Activated CD4-positive, alpha-beta memory T cell treated with anti-CD3 and anti-CD28 coated beads for 36 hours (primary cell): ENCODE measurements at regions of chr2 and their contacts with region 1.

Region 1: DNA sequence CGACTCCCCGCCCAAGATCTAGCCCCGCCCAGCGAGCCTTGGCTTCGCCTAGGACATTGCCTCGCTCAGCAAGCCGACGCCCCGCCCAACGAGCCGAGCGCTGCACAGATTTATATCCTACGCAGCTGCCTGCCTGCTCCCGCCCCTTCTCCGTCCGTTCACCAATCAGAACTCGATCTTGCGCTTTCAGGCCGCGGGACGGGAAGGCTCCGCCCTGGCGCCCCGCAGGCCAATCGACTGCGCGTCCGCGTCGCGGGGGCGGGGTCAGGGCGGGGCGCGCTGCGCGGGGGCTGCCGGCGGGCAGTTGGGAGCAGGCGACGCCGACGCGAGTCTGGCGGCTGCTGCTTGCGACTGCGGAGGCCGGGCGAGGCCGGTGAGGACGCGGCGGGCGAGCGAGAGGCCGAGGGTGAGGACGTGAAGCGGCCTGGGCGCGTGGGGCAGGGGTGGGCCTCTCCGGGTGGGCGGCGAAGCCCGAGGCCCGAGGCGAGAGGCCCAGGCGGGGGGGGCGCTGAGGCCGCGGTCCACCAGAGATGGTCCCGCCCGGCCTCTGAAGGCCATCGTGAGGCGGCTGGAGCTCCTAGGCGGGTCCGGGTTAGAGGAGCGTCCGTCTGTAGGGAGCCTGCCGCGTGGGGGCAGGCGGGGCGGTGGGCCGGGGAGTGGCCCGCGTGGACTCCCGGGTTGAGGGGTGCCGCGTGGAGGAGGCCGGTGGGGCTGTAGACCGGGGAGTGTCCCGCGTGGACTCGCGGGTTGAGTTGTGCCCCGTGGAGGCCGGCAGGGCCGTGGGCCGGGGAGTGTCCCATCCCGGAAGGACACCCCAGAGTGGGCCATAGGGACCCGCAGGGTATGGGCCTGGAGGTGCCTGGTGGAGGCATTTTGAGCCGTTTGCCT is at the start of gene FARP2:
- DNase-seq: peak; percentile 98
- H3K4me3 Mint-ChIP-seq: peak within 1 kb of the TSS; percentile 75
- H3K27ac Mint-ChIP-seq: peak within 1 kb of the TSS; percentile 79
- H3K4me1 Mint-ChIP-seq: peaks cover 35% of the 10 kb centered on the region
- H3K27me3 Mint-ChIP-seq: no peaks in the 10 kb centered on the region
- total RNA-seq, gene FARP2: 25.1 to 29.5 TPM

Region 2: GRCh38 chr2:240021488-240022104 is 1334.6 kb before region 1 on chr2:
- CTCF ChIA-PET with region 1: no interaction called
- POLR2A ChIA-PET with region 1: no interaction called
- intact Hi-C with region 1: loop called (anchors 5 kb)
- DNase-seq: peak; percentile 76
- H3K4me3 Mint-ChIP-seq: no peak overlapping the region
- H3K27ac Mint-ChIP-seq: no peak overlapping the region
- H3K4me1 Mint-ChIP-seq: peaks cover 19% of the 10 kb centered on the region
- H3K27me3 Mint-ChIP-seq: no peaks in the 10 kb centered on the region

Region 3: GRCh38 chr2:241300000-241300399 is 56.2 kb before region 1 on chr2:
- CTCF ChIA-PET with region 1: no interaction called
- POLR2A ChIA-PET with region 1: no interaction called
- intact Hi-C with region 1: no loop called
- DNase-seq: peak; percentile 42
- H3K4me3 Mint-ChIP-seq: no peak overlapping the region
- H3K27ac Mint-ChIP-seq: no peak overlapping the region
- H3K4me1 Mint-ChIP-seq: peaks cover 37% of the 10 kb centered on the region
- H3K27me3 Mint-ChIP-seq: no peaks in the 10 kb centered on the region

Region 4: DNA sequence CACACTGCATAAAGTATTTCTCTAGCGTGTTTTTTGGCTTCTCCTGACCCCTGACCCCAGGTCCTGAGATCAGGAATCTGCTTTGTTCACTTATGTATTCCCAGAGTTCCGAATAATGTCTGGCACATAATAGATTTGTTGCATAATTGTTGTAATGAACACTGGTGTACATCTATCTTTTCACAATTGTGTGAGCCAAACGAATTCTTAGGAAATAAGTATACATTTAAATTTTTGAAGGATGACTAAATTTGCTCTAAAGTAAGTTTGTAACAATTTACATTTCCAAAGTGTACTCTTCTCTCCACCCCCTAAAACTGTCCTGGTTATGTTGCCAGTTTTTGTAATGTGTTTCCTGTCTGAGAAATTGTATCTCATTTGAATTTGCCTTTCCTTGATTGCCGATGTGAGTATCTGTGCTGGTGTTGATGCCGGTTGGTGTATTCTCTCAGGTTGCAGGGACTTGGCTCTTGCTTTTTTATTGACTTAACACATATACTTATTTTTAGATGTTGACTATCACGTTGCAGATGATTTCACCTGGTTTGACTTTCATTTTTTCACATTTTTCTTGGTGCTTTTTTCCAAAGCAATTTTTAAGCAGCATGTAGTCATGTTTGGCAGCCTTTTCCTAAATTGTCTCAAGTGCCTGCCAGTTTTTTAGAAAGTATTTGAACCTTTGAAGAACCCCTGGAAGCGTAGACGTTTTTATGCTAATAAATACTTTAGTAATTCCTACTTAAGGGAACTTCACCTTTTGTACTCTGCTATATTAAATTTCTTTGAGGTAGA is 16.2 kb before region 1 on chr2:
- CTCF ChIA-PET with region 1: no interaction called
- POLR2A ChIA-PET with region 1: no interaction called
- intact Hi-C with region 1: loop called (anchors 1 kb)
- DNase-seq: no peak
- H3K4me3 Mint-ChIP-seq: no peak overlapping the region
- H3K27ac Mint-ChIP-seq: peak overlapping the region; percentile 70
- H3K4me1 Mint-ChIP-seq: peaks cover 39% of the 10 kb centered on the region
- H3K27me3 Mint-ChIP-seq: no peaks in the 10 kb centered on the region

Region 5: GRCh38 chr2:241686649-241687425 is 330.6 kb after region 1 on chr2 and contains the start of gene DTYMK:
- CTCF ChIA-PET with region 1: no interaction called
- POLR2A ChIA-PET with region 1: no interaction called
- intact Hi-C with region 1: loop called (anchors 5 kb)
- DNase-seq: peak; percentile 97
- H3K4me3 Mint-ChIP-seq: peak within 1 kb of the TSS; percentile 98
- H3K27ac Mint-ChIP-seq: peak within 1 kb of the TSS; percentile 93
- H3K4me1 Mint-ChIP-seq: peaks cover 27% of the 10 kb centered on the region
- H3K27me3 Mint-ChIP-seq: no peaks in the 10 kb centered on the region
- total RNA-seq, gene DTYMK: 85.9 to 88.7 TPM

Region 6: DNA sequence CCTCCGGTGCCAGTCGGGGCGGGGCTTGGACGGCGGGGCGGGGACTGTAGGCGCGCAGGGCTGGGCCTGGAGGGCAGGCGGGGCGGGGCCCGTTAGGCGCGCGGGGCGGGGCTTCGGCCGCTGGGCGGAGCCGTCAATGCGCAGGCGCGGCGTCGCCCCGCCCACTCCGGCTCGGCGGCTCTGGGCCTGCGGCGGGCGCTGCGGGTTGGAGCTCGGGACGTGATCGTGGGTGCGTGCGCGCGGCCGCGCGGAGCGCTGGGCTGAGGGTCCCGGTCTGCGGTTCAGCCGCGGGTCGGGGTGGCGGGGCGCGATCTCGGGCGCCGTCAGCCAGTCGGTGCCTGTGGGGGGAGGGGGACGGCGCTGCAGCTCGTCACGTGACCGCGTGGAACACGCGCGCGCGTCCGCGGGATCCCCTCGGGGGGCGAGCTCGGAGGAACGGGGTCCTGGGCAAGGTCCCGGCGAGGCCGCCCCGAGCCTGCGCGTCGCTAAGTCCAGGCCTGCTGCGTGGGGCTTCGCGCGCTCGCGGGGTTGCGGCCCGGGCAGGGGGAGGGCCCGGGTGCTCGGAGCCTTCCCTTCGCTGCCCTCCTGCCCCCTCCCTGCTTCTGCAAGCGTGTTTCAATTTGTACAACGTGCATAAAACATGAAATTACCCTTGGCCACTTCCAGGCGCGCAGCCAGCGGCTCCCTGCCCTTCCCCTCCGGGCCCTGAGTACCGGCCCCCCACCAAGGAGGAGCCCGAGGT is 378.4 kb after region 1 on chr2 and contains the start of gene D2HGDH:
- CTCF ChIA-PET with region 1: no interaction called
- POLR2A ChIA-PET with region 1: no interaction called
- intact Hi-C with region 1: loop called (anchors 5 kb)
- DNase-seq: peak; percentile 95
- H3K4me3 Mint-ChIP-seq: peak within 1 kb of the TSS; percentile 81
- H3K27ac Mint-ChIP-seq: peak within 1 kb of the TSS; percentile 70
- H3K4me1 Mint-ChIP-seq: peaks cover 49% of the 10 kb centered on the region
- H3K27me3 Mint-ChIP-seq: no peaks in the 10 kb centered on the region
- total RNA-seq, gene D2HGDH: 27.5 to 28.2 TPM